ENCODE measurements at regions of chr2 and their contacts with region 1.

Region 1: DNA sequence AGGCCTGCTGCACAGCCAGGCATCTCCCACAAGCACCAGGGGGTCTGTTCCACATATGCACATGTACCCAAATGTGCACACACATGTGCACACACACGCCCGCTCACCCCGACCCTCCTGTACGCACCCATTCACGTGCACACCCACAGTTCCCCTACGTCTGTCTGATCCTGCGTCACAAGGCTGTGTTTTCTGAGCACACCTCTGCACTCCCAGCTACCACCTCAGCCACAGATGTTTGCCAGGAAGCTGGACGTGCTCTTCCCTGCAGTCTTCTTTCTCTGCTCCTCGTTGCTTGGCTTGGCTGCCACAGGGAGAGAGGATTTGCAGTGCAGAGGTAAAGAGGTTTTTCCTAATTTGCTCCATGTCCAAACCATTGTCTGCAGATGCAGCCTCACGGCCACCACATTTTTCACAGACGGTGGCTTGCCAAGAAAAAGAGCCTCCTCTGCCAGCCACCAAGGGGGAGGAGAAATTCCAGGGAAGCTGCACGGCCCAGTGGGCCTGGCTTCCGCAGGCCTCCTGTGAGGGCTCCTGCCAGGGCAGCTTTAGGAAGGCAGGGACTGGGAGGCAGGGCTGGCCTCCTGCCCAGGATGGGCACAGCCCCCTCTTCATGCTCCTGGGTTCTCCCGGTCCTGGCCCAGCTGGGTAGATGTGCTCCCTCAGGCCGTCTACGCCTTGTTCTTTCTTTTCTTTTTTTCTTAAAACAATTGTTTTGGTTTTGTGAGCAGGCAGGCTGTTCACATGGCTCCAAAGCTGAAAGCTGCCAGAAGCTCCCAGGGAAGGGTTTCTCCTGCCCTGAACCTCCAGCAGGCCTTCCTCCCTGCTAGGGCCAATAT is 29.3 kb upstream of the HS6ST1 start:
- ATAC-seq: peak; percentile 54 to 99 (median 92)
- H3K4me3 ChIP-seq: no peak overlapping the region
- H3K27ac ChIP-seq: no peak overlapping the region
- H3K4me1 ChIP-seq: peaks cover 8 to 9% of the 10 kb centered on the region in 2 donors

Region 2: GRCh38 chr2:128473175-128474035 is 125.5 kb after region 1 on chr2:
- in situ Hi-C with region 1: no loop called
- ATAC-seq: peak; percentile 59 to 96 (median 95)
- H3K4me3 ChIP-seq: no peak overlapping the region
- H3K27ac ChIP-seq: peak overlapping the region; percentile 66 to 70
- H3K4me1 ChIP-seq: peaks cover 22 to 35% of the 10 kb centered on the region in 2 donors

Region 3: DNA sequence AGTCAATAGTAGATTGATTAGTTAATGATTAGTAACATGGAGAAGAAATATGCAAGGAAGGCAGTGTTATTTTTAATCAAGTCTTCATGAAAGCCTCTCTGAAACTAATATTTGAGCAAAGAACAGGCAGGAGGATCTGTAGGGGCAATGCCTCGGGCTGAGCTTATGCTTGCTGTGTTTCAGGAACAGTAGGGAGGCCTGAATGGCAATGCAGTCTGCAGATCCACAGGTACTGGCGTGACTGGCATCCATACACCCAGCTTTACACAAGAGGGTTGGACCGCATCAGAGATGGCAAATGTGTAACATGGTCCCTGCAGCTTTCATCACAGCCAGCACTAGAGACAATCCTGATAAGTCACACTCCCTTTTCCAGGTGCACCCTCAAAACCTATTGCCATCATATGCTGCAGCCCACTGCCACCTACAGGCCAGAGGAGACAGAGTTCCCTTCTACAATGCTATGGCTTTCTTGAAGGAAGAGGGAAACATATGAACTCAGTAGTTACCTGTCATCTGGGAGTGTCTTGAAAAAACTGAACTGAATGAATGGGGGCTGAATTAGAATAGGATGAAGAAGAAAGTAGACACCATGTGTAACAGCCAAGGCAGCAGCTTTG is 1049.2 kb after region 1 on chr2:
- in situ Hi-C with region 1: loop called in 1 of 9 experiments (anchors 25 kb)
- ATAC-seq: peak; percentile 72 to 90 (median 82)
- H3K4me3 ChIP-seq: no peak overlapping the region
- H3K27ac ChIP-seq: no peak overlapping the region
- H3K4me1 ChIP-seq: peaks cover 6 to 12% of the 10 kb centered on the region in 2 donors